MCF 10A (cell line): ENCODE measurements at regions of chr3 and their contacts with region 1.

Region 1: DNA sequence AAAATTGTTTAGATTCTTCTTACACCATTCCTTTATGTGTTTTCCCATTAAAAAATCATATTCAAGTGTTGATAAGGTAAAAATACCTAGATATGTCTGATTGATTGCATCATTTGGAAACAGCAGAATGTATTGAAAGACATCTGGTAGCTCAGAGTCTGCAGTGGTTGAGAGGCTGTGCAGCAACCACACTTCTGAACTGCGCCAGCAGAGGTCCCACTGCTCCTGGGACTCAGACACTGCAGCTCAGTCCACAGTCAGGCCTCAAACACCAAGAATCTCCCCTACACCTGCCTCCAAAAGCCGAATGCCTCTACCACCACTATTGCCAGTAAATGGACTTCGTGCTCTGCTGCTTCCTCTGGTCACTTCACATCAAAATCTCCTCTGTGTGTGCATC is 176.9 kb upstream of the LMCD1 start:
- DNase-seq: peak; percentile 32
- H3K4me3 Mint-ChIP-seq: no peak overlapping the region
- H3K27ac Mint-ChIP-seq: no peak overlapping the region
- H3K4me1 Mint-ChIP-seq: peaks cover 4% of the 10 kb centered on the region
- H3K27me3 Mint-ChIP-seq: peaks cover 19% of the 10 kb centered on the region
- CTCF ChIP-seq: peak; percentile 45

Region 2: DNA sequence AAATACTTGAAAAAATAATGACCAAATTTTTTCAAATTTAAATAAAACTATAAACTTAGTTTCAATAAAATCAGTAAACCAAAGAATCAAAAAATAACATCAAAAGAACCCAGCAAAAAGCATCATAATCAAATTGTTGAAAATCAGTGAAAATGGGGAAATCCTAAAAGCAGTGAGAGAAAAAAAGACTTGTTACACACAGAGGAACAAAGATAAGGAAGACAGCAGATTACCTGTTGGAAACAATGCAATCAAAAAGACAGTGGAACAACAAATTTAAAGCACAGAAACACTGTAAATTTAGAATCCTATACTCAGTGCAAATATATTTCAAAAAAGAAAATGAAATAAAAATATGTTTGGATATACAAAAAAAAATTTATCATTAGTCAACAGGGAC is 20.7 kb after region 1 on chr3:
- CTCF ChIA-PET with region 1: interaction called, 3 read pairs
- POLR2A ChIA-PET with region 1: no interaction called
- intact Hi-C with region 1: loop called (anchors 2 kb)
- DNase-seq: no peak
- H3K4me3 Mint-ChIP-seq: no peak overlapping the region
- H3K27ac Mint-ChIP-seq: no peak overlapping the region
- H3K4me1 Mint-ChIP-seq: no peaks in the 10 kb centered on the region
- H3K27me3 Mint-ChIP-seq: no peaks in the 10 kb centered on the region
- CTCF ChIP-seq: no peak

Region 3: GRCh38 chr3:8416965-8417364 is 92.2 kb after region 1 on chr3:
- CTCF ChIA-PET with region 1: interaction called, 23 read pairs
- POLR2A ChIA-PET with region 1: no interaction called
- intact Hi-C with region 1: loop called (anchors 1 kb)
- DNase-seq: peak; percentile 62
- H3K4me3 Mint-ChIP-seq: peak overlapping the region; percentile 47
- H3K27ac Mint-ChIP-seq: no peak overlapping the region
- H3K4me1 Mint-ChIP-seq: peaks cover 9% of the 10 kb centered on the region
- H3K27me3 Mint-ChIP-seq: peaks cover 6% of the 10 kb centered on the region
- CTCF ChIP-seq: no peak

Region 4: DNA sequence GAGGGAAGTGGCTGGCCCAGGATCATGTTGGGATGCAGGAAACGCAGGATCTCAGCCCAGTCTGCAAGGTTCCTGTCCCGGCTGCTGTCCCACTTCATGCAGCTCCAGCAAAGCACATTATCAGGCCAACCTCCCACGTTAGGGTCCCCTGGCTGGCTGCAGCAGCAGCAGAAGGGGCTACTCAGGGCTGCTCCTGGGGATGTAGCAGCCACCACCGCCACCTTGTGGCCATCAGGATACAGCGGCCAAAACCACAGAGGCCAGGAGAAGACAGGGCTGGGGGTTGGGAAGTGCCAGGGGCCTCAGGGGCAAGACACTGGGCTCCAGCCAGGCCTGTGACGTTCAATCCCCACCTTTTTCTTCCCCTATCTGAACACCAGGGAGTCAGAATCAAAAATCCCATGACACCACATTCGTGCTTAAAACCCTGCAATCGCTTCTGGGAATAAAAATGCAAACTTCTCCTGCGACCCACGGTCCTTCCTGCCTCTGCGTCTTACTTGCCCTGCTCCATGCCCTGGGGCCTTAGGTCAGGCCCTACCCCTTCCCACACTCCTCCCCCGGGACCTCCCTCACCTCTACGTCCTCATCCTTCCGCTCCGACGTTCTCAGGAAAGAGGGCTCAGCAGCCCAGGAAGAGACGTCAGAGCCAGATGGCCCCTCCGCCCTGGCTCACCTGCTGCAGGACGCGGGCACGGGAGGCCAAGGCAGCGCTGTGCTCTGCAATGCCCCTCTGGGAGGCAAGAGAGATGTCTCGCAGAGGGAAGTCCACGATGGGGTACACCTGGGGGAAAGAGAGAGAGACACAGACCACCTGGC is 298.3 kb after region 1 on chr3:
- CTCF ChIA-PET with region 1: no interaction called
- POLR2A ChIA-PET with region 1: no interaction called
- intact Hi-C with region 1: loop called (anchors 10 kb)
- DNase-seq: peak; percentile 68
- H3K4me3 Mint-ChIP-seq: no peak overlapping the region
- H3K27ac Mint-ChIP-seq: no peak overlapping the region
- H3K4me1 Mint-ChIP-seq: peaks cover 11% of the 10 kb centered on the region
- H3K27me3 Mint-ChIP-seq: no peaks in the 10 kb centered on the region
- CTCF ChIP-seq: peak; percentile 93